GM12878 (cell line): ENCODE measurements at regions of chr1 and their contacts with region 1.

Region 1: GRCh38 chr1:235415008-235415904 is 48.0 kb downstream of the TBCE start:
- DNase-seq: peak; percentile 15
- ATAC-seq: peak; percentile 97
- H3K4me3 ChIP-seq: no peak overlapping the region
- H3K27ac ChIP-seq: no peak overlapping the region
- H3K4me1 ChIP-seq: no peaks in the 10 kb centered on the region
- H3K27me3 ChIP-seq: no peaks in the 10 kb centered on the region
- CTCF ChIP-seq: peak; percentile 78 to 81 (median 80)
- EP300 ChIP-seq: no peak
- POLR2A ChIP-seq: no peak
- RAD21 ChIP-seq: peak; percentile 73

Region 2: DNA sequence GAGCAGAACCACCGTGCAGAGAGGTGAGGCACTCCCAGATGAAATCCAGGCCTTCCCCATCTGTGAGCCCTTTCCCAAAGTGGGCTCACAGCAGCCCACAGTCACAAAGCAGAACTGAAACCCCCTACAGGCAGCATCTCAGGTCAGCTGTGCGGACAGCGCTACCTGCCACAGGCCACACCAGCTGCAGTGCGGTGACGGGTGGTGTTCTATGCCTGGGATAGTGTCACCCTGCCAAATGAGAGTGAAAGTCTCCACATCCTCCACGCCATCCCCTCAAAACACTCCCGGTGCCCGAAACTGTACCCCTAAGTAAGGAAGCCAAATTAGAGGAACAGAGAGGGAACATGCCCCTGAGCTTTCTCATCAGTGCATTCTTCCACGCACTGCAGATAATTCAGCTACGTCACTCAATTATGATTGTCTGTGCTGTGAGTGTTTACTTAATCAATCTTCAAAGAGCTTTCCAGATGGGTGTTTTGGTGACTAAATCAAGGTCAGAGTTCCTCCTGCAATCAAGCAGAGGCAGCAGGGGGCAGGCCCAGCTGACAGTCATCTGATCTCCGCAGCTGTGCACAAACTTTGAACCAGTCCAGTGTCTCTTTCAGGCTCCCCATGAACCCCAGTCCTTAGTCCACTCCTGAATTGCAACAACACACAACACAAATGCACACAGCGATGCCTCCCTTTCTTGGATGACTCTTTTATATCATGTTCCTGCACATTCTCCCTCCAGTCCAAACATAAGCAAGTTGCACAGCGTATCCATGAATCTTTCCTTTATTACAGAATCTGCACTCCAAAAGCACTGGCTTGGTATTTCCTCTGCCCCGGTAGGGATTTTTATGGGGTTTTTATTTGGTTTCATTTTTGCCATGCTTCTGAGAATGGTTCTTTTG is 436.6 kb before region 1 on chr1:
- CTCF ChIA-PET with region 1: no interaction called
- POLR2A ChIA-PET with region 1: no interaction called
- RAD21 ChIA-PET with region 1: no interaction called
- SMC1A ChIA-PET with region 1: no interaction called
- in situ Hi-C with region 1: no loop called
- intact Hi-C with region 1: no loop called
- DNase-seq: peak; percentile 94
- ATAC-seq: peak; percentile 66
- H3K4me3 ChIP-seq: peak overlapping the region; percentile 29
- H3K27ac ChIP-seq: peak overlapping the region; percentile 98
- H3K4me1 ChIP-seq: peaks cover 76% of the 10 kb centered on the region
- H3K27me3 ChIP-seq: no peaks in the 10 kb centered on the region
- CTCF ChIP-seq: peak in 2 of 3 experiments; percentile 13 to 16; a peak in 2 of 6 replicates
- EP300 ChIP-seq: peak; percentile 96 to 99
- POLR2A ChIP-seq: 0 out of 2 replicates have a peak, but pooled peaks have one; percentile 56
- RAD21 ChIP-seq: peak; percentile 44

Region 3: DNA sequence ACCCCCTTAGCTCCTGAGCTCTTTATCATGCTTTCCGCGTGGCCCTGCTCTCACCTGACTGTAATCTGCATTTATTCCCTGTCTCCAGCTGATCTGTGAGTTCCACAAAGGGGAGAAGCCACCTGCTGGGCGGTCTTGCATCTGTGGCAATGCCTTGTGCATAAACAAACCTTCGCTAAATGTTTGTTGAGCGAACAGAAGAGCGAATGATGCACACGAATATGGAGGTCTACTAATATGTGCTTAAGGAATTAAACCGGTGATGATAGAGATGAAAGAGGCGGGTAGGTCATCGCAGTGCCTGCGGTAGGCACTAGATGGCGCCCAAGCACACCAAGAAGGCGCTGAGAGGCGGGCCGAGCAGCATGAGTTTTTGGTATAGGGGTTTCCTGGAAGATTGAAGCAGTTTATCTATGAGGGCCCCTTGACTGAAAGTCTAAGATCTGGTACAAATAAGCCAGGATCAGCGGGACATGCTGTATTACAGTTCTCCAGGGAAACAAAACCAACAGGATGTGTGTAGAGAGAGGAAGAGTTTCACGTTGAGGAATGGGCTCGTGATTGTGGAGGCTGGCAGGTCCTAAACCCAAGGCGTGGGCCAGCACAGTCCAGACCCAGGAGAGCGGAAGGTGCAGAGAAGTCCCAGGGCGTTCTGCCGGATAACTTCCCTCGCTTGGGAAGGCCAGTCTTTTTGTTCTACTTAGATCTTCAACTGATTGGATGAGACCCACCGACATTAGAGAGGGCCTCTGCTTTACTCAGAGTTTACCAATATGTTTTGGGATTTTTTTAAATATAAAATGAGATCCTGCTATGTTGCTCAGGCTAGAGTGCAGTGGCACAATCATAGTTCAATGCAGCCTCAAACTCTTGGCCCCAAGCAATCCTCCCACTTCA is 321.3 kb before region 1 on chr1:
- CTCF ChIA-PET with region 1: interaction called, 63 read pairs
- POLR2A ChIA-PET with region 1: interaction called, 3 read pairs
- RAD21 ChIA-PET with region 1: interaction called, 28 read pairs
- SMC1A ChIA-PET with region 1: interaction called, 18 read pairs
- in situ Hi-C with region 1: no loop called
- intact Hi-C with region 1: loop called (anchors 2 kb)
- DNase-seq: no peak
- ATAC-seq: peak; percentile 94
- H3K4me3 ChIP-seq: no peak overlapping the region
- H3K27ac ChIP-seq: no peak overlapping the region
- H3K4me1 ChIP-seq: no peaks in the 10 kb centered on the region; the same call in 1 of the 2 replicates
- H3K27me3 ChIP-seq: no peaks in the 10 kb centered on the region
- CTCF ChIP-seq: peak; percentile 91 to 97 (median 94)
- EP300 ChIP-seq: no peak
- POLR2A ChIP-seq: no peak
- RAD21 ChIP-seq: peak; percentile 81

Region 4: DNA sequence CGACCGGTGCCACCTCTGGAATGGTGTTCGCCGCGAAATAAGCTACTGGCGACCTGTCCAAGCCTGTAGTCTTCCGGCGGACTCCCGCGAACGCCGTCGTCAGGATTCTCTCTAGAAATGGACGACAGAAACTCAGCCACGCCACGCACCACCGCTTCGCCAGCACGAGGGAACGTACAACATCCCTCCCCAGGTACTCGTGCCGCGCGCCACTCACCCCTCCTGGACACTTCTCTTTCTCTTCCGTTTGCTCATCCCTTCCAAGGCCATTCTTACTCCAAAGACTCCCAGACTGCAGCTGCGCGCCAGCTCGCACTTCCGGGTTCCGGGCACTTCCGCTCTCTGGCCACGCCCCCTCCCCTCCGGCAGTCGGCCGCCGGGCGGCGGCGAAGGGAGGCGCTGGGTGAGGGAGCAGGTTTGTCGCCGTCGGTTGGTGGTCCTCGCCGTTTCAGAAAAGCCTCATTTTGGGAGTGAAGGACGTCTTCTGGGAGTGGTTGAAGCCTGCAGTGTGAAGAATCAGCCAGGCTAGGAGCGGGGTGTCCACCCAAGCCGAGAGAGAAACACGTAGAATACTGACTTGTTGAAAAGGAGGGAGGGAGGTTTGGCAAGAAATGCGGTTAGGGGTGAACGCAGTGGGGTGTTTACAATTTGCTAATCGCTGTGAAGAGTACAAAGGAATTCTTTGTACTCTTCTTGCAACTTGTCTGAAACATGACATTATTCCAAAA is 254.1 kb before region 1 on chr1 and contains the start of gene RBM34:
- CTCF ChIA-PET with region 1: interaction called, 18 read pairs
- POLR2A ChIA-PET with region 1: interaction called, 9 read pairs
- RAD21 ChIA-PET with region 1: interaction called, 11 read pairs
- SMC1A ChIA-PET with region 1: interaction called, 10 read pairs
- in situ Hi-C with region 1: no loop called
- intact Hi-C with region 1: no loop called
- DNase-seq: peak; percentile 65
- ATAC-seq: peak; percentile 96
- H3K4me3 ChIP-seq: peak within 1 kb of the TSS; percentile 82
- H3K27ac ChIP-seq: peak within 1 kb of the TSS; percentile 98
- H3K4me1 ChIP-seq: peaks cover 3% of the 10 kb centered on the region; the same call in 1 of the 2 replicates
- H3K27me3 ChIP-seq: no peaks in the 10 kb centered on the region
- CTCF ChIP-seq: peak in 2 of 3 experiments; percentile 19 to 23; a peak in 1 of 6 replicates
- EP300 ChIP-seq: no peak
- POLR2A ChIP-seq: peak; percentile 98
- RAD21 ChIP-seq: no peak
- polyA plus RNA-seq, gene RBM34: 98.2 to 124 TPM

Region 5: GRCh38 chr1:235199441-235199840 is 215.8 kb before region 1 on chr1:
- CTCF ChIA-PET with region 1: interaction called, 44 read pairs
- POLR2A ChIA-PET with region 1: no interaction called
- RAD21 ChIA-PET with region 1: interaction called, 18 read pairs
- SMC1A ChIA-PET with region 1: interaction called, 11 read pairs
- in situ Hi-C with region 1: no loop called
- intact Hi-C with region 1: loop called (anchors 5 kb)
- DNase-seq: no peak
- ATAC-seq: peak; percentile 67
- H3K4me3 ChIP-seq: no peak overlapping the region
- H3K27ac ChIP-seq: no peak overlapping the region
- H3K4me1 ChIP-seq: no peaks in the 10 kb centered on the region
- H3K27me3 ChIP-seq: no peaks in the 10 kb centered on the region
- CTCF ChIP-seq: peak in 2 of 3 experiments; percentile 24; a peak in 2 of 6 replicates
- EP300 ChIP-seq: no peak
- POLR2A ChIP-seq: no peak
- RAD21 ChIP-seq: no peak

Region 6: GRCh38 chr1:235246022-235246991 is 168.9 kb before region 1 on chr1:
- CTCF ChIA-PET with region 1: interaction called, 101 read pairs
- POLR2A ChIA-PET with region 1: interaction called, 3 read pairs
- RAD21 ChIA-PET with region 1: interaction called, 13 read pairs
- SMC1A ChIA-PET with region 1: interaction called, 46 read pairs
- in situ Hi-C with region 1: loop called (anchors 5 kb)
- intact Hi-C with region 1: no loop called
- DNase-seq: no peak
- ATAC-seq: peak; percentile 65
- H3K4me3 ChIP-seq: no peak overlapping the region
- H3K27ac ChIP-seq: peak overlapping the region; percentile 6; the same call in 1 of the 2 replicates
- H3K4me1 ChIP-seq: peaks cover 11% of the 10 kb centered on the region; the same call in 1 of the 2 replicates
- H3K27me3 ChIP-seq: no peaks in the 10 kb centered on the region
- CTCF ChIP-seq: no peak
- EP300 ChIP-seq: no peak; a peak in 1 of 4 replicates
- POLR2A ChIP-seq: no peak
- RAD21 ChIP-seq: no peak

Region 7: GRCh38 chr1:235339746-235340445 is 75.4 kb before region 1 on chr1:
- CTCF ChIA-PET with region 1: interaction called, 19 read pairs
- POLR2A ChIA-PET with region 1: no interaction called
- RAD21 ChIA-PET with region 1: no interaction called
- SMC1A ChIA-PET with region 1: interaction called, 3 read pairs
- in situ Hi-C with region 1: no loop called
- intact Hi-C with region 1: no loop called
- DNase-seq: no peak
- ATAC-seq: no peak
- H3K4me3 ChIP-seq: no peak overlapping the region
- H3K27ac ChIP-seq: no peak overlapping the region
- H3K4me1 ChIP-seq: 0 out of 2 replicates have a peak, but pooled peaks cover 3% of the 10 kb centered on the region
- H3K27me3 ChIP-seq: no peaks in the 10 kb centered on the region
- CTCF ChIP-seq: no peak; a peak in 1 of 6 replicates
- EP300 ChIP-seq: no peak
- POLR2A ChIP-seq: no peak
- RAD21 ChIP-seq: 0 out of 2 replicates have a peak, but pooled peaks have one; percentile 14